CD4-positive, alpha-beta memory T cell (primary cell): ENCODE measurements at regions of chr19 and their contacts with region 1.

Region 1: DNA sequence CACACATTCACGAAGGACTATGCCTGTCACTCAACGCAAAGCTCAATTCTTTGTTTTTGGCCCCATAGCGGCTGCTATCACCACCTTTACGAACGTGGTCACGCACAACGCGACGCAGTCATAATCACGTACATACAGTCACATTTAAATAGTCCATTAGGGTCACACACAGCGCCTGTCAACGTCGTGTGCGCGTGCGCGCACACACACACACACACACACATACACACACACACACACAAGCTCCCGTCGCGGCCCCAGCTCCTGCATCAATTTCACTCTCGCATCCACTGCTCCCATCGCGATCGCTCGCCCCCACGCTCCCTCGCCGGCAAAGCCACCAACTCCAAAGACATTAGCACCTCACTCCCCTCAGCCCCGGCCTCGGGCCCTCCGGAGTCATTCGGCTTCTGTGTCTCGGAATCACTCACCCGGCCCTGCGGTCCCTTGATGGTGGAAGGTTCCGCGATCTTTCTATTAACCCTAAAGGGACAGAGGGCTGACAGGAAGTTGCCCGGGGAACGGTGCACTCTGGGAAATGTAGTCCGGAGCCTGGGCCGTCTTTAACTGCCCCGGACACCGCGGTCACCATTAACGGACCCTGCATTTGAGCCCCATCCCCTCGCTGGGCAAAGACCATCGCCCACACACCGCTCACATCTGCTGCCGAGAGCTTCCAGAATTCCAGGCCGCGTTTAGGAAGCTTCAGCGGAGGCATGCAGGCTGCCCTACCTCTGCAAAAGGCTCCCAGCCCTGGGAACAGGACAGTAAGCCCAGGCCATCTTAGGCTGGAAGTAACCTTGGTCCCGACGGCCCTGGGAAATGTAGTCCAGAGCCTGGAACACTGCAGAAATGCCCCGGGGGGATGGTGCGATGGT is at the start of gene ZNF790:
- DNase-seq: peak; percentile 88 to 94 (median 91)
- H3K4me3 ChIP-seq: peak within 1 kb of the TSS; percentile 48 to 97
- H3K4me3 Mint-ChIP-seq: peak within 1 kb of the TSS in 4 of 8 donors; percentile 31 to 71 (median 44)
- H3K27ac ChIP-seq: peak within 1 kb of the TSS; percentile 73
- H3K27ac Mint-ChIP-seq: peak within 1 kb of the TSS in 2 of 7 donors; percentile 45 to 54
- H3K4me1 ChIP-seq: peaks cover 18% of the 10 kb centered on the region
- H3K4me1 Mint-ChIP-seq: peaks cover 0 to 13% (median 5%) of the 10 kb centered on the region in 4 donors
- H3K27me3 ChIP-seq: no peaks in the 10 kb centered on the region
- H3K27me3 Mint-ChIP-seq: no peaks in the 10 kb centered on the region
- total RNA-seq, gene ZNF790: 12.4 to 13.4 TPM

Region 2: GRCh38 chr19:36113894-36114762 is 724.0 kb before region 1 on chr19:
- CTCF ChIA-PET with region 1: no interaction called
- POLR2A ChIA-PET with region 1: no interaction called
- intact Hi-C with region 1: no loop called
- DNase-seq: peak in 2 of 5 donors; percentile 22 to 60
- H3K4me3 ChIP-seq: peak overlapping the region; percentile 75 to 99
- H3K4me3 Mint-ChIP-seq: peak overlapping the region; percentile 89 to 99 (median 94)
- H3K27ac ChIP-seq: peak overlapping the region; percentile 80
- H3K27ac Mint-ChIP-seq: peak overlapping the region; percentile 95 to 100 (median 98)
- H3K4me1 ChIP-seq: peaks cover 30% of the 10 kb centered on the region
- H3K4me1 Mint-ChIP-seq: peaks cover 21 to 51% (median 36%) of the 10 kb centered on the region in 4 donors
- H3K27me3 ChIP-seq: no peaks in the 10 kb centered on the region
- H3K27me3 Mint-ChIP-seq: peaks cover 0 to 2% of the 10 kb centered on the region in 2 donors

Region 3: DNA sequence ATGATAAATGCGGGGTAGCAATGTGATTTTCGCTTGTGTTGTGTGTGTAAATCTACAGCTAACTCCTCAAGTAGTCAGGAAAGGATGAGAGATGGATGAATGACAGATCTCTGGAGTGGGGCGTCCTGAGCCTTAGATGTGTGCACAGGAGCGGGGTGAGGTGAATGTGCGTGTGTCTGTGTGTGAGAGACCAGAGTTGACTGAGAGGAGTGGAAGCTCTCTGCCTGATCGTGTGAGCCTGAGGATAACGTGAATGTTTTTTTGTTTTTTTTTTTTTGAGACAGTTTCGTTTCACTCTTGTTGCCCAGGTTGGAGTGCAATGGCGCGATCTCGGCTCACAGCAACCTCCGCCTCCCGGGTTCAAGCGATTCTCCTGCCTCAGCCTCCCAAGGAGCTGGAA is 172.3 kb before region 1 on chr19:
- CTCF ChIA-PET with region 1: no interaction called
- POLR2A ChIA-PET with region 1: interaction called, 3 read pairs
- intact Hi-C with region 1: loop called (anchors 5 kb)
- DNase-seq: no peak
- H3K4me3 ChIP-seq: peak overlapping the region; percentile 76 to 100
- H3K4me3 Mint-ChIP-seq: peak overlapping the region; percentile 94 to 100 (median 99)
- H3K27ac ChIP-seq: peak overlapping the region; percentile 71
- H3K27ac Mint-ChIP-seq: peak overlapping the region in 6 of 7 donors; percentile 5 to 99 (median 94)
- H3K4me1 ChIP-seq: peaks cover 28% of the 10 kb centered on the region
- H3K4me1 Mint-ChIP-seq: peaks cover 24 to 45% (median 31%) of the 10 kb centered on the region in 4 donors
- H3K27me3 ChIP-seq: no peaks in the 10 kb centered on the region
- H3K27me3 Mint-ChIP-seq: no peaks in the 10 kb centered on the region

Region 4: DNA sequence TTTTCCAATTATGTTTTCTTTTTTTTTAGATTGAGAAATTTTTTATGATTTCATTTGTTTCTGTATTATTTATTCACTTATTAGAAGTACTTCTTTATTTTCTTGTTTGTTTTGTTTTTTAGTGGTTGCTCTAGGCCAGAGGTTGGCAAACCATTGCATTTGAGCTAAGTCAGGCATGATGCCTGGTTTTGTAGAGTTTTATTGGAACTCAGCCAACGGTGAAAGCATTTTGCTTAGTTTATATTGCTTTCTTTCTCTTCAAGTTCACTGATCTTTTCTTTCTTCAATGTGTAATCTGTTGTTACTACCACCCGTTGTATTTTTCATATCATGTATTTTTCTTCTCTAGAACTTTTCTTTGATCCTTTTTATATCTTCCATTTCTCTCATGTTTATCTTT is 131.0 kb before region 1 on chr19:
- CTCF ChIA-PET with region 1: no interaction called
- POLR2A ChIA-PET with region 1: no interaction called
- intact Hi-C with region 1: no loop called
- DNase-seq: no peak
- H3K4me3 ChIP-seq: no peak overlapping the region
- H3K4me3 Mint-ChIP-seq: peak overlapping the region in 1 of 8 donors; percentile 17
- H3K27ac ChIP-seq: no peak overlapping the region
- H3K27ac Mint-ChIP-seq: no peak overlapping the region
- H3K4me1 ChIP-seq: no peaks in the 10 kb centered on the region
- H3K4me1 Mint-ChIP-seq: peaks cover 0 to 3% (median 1%) of the 10 kb centered on the region in 4 donors
- H3K27me3 ChIP-seq: no peaks in the 10 kb centered on the region
- H3K27me3 Mint-ChIP-seq: no peaks in the 10 kb centered on the region

Region 5: DNA sequence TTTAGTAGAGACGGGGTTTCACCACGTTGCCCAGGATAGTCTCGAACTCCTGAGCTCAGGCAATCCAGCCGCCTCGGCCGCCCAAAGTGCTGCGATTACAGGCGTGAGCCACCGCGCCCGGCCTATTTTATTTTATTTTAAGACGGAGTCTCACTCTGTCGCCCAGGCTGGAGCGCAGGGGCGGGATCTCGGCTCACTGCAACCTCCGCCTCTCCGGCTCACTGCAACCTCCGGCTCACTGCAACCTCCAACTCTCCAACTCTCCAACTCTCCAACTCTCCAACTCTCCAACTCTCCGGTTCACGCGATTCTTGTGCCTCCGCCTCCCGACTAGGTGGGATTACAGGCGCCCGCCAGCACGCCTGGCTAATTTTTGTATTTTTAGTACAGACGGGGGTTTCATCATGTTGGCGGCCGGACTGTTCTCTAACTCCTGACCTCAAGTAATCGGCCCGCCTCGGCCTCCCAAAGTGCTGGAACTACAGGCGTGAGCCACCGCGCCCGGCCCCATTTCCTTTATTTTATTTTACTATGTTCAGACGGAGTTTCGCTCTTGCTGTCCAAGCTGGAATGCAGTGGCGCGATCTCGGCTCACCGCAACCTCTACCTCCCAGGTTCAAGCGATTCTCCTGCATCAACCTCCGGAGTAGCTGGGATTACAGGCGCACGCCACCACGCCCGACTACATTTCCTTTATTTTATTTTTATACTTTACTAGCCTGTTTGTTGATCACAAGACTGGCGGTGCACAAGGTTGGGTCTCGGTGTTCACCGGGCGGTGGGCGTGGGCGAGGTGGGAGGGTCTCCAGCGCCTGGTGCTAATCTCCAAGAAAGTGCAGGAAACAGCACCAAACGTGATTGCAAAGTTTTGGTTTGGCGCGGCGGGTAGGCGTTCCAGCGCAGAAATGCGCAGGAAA is 41.8 kb before region 1 on chr19:
- CTCF ChIA-PET with region 1: no interaction called
- POLR2A ChIA-PET with region 1: interaction called, 13 read pairs
- intact Hi-C with region 1: loop called (anchors 1 kb)
- DNase-seq: no peak
- H3K4me3 ChIP-seq: peak overlapping the region; percentile 94 to 96
- H3K4me3 Mint-ChIP-seq: peak overlapping the region; percentile 99 to 100 (median 99)
- H3K27ac ChIP-seq: peak overlapping the region; percentile 79
- H3K27ac Mint-ChIP-seq: peak overlapping the region; percentile 99 to 100 (median 100)
- H3K4me1 ChIP-seq: peaks cover 4% of the 10 kb centered on the region
- H3K4me1 Mint-ChIP-seq: peaks cover 5 to 35% (median 21%) of the 10 kb centered on the region in 4 donors
- H3K27me3 ChIP-seq: no peaks in the 10 kb centered on the region
- H3K27me3 Mint-ChIP-seq: peaks cover 0 to 6% of the 10 kb centered on the region in 2 donors

Region 6: GRCh38 chr19:37077934-37078725 is 240.0 kb after region 1 on chr19 and contains the start of gene ZNF420:
- CTCF ChIA-PET with region 1: no interaction called
- POLR2A ChIA-PET with region 1: interaction called, 4 read pairs
- intact Hi-C with region 1: loop called (anchors 1 kb)
- DNase-seq: peak; percentile 85 to 92 (median 87)
- H3K4me3 ChIP-seq: peak within 1 kb of the TSS; percentile 61 to 88
- H3K4me3 Mint-ChIP-seq: peak within 1 kb of the TSS; percentile 90 to 100 (median 98)
- H3K27ac ChIP-seq: peak within 1 kb of the TSS; percentile 73
- H3K27ac Mint-ChIP-seq: peak within 1 kb of the TSS; percentile 85 to 99 (median 95)
- H3K4me1 ChIP-seq: peaks cover 23% of the 10 kb centered on the region
- H3K4me1 Mint-ChIP-seq: peaks cover 22 to 43% (median 27%) of the 10 kb centered on the region in 4 donors
- H3K27me3 ChIP-seq: no peaks in the 10 kb centered on the region
- H3K27me3 Mint-ChIP-seq: no peaks in the 10 kb centered on the region
- total RNA-seq, gene ZNF420: 25.0 to 28.6 TPM